ENCODE measurements at regions of chr9 and their contacts with region 1.

Region 1: GRCh38 chr9:34185778-34186551 is 7.1 kb downstream of the UBAP1 start:
- DNase-seq: peak; percentile 85
- ATAC-seq: peak; percentile 85
- H3K4me3 ChIP-seq: no peak overlapping the region
- H3K27ac ChIP-seq: peak overlapping the region; percentile 36
- H3K4me1 ChIP-seq: peaks cover 13% of the 10 kb centered on the region
- H3K27me3 ChIP-seq: no peaks in the 10 kb centered on the region
- CTCF ChIP-seq: no peak

Region 2: DNA sequence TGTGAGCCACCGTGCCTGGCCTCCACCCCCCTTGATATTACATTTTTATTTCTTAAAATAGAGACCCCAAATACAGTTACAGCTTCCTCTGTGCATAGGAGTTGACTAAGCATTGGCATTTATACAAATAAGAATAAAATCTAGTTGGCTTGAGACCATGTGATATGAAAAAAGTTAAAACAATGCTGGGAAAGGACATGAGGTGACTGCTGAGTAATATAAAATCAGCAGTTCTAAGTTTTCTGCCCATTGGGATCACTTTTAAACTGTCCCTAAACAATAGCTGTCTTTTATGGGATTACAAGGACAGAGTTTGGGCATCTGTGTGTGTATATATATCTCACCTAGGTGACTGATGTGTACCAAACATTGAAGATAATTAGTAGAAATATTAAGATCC is 272.4 kb before region 1 on chr9:
- CTCF ChIA-PET with region 1: no interaction called
- POLR2A ChIA-PET with region 1: no interaction called
- in situ Hi-C with region 1: no loop called
- intact Hi-C with region 1: no loop called
- DNase-seq: no peak
- ATAC-seq: no peak
- H3K4me3 ChIP-seq: no peak overlapping the region
- H3K27ac ChIP-seq: no peak overlapping the region
- H3K4me1 ChIP-seq: no peaks in the 10 kb centered on the region
- H3K27me3 ChIP-seq: no peaks in the 10 kb centered on the region
- CTCF ChIP-seq: no peak

Region 3: DNA sequence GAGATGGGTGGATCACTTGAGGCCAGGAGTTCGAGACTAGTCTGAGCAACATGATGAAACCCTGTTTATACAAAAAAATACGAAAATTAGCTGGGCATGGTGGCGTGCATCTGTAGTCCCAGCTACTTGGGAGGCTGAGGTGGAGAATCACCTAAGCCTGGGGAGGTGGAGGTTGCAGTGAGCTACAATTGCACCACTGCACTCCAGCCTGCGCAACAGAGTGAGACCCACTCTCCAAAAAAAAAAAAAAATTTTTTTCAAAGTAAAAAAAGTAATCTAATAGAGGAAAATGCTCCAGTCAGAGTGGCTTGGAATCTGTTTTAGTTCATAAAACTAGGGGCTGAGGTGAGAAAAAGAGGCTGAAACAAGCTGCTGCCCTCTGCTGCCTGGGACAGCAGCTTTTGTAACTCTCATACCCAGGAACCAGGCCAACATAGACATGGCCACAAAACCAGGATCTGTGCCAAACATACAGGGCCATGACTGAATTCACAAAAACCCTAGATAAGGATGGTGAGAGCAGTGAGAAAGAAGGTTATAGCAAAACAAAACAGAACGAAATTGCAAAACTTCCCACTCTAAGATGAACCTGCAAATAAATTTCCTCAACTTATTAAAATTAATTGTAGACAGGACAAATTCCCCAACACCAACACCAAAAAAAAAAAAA is 46.4 kb before region 1 on chr9:
- CTCF ChIA-PET with region 1: no interaction called
- POLR2A ChIA-PET with region 1: interaction called, 12 read pairs
- in situ Hi-C with region 1: no loop called
- intact Hi-C with region 1: no loop called
- DNase-seq: no peak
- ATAC-seq: peak; percentile 88
- H3K4me3 ChIP-seq: no peak overlapping the region
- H3K27ac ChIP-seq: no peak overlapping the region
- H3K4me1 ChIP-seq: no peaks in the 10 kb centered on the region
- H3K27me3 ChIP-seq: no peaks in the 10 kb centered on the region
- CTCF ChIP-seq: no peak

Measured in Panc1 (cell line).